ENCODE measurements at regions of chr4 and their contacts with region 1.

Region 1: GRCh38 chr4:16129336-16129735 is 45.5 kb upstream of the PROM1 start:
- DNase-seq: peak; percentile 91
- ATAC-seq: peak; percentile 93
- H3K4me3 ChIP-seq: no peak overlapping the region; a peak in 1 of 6 replicates
- H3K27ac ChIP-seq: no peak overlapping the region
- H3K4me1 ChIP-seq: peaks cover 83% of the 10 kb centered on the region
- H3K27me3 ChIP-seq: peaks cover 0 to 3% of the 10 kb centered on the region in 2 experiments; a peak in 1 of 5 replicates
- CTCF ChIP-seq: no peak
- EP300 ChIP-seq: peak in 1 of 2 experiments; percentile 85; a peak in 2 of 4 replicates
- POLR2A ChIP-seq: no peak
- RAD21 ChIP-seq: no peak

Region 2: DNA sequence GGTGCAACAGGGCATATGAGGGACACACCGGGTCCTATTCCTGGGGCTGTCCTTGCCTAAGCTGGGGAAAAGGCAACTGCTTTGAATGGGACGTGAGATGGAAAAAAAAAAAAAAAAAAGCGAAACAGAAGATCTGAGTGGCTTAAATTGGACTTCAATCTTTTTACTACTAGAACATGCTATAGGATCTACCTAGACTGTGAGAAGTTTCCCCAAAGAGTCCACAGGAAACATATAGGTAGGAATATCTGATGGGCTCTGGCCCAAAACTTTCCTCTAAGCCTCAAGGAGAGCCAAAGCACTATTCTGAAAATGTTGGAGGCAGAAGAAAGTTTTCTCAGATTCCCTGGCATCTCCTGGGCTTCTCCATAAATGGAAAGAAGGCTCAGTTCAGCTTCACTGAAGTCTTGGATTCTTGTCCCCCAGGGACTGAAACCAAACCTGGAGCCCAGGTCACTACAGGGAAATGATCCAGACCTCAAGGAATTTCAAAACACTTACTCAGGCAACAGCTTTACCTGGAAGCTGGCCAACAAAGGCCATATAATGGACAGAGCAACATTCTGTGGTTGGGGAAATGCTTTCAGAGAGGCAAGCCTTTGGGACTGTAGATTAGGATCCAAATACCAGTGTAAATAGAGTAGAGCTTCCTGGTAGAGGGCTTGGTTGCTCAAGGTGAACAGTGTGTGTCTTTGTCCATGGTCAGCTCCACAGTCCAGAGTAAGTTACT is 11.3 kb after region 1 on chr4:
- CTCF ChIA-PET with region 1: no interaction called
- POLR2A ChIA-PET with region 1: interaction called, 15 read pairs
- in situ Hi-C with region 1: no loop called
- intact Hi-C with region 1: loop called (anchors 1 kb)
- DNase-seq: peak; percentile 99
- ATAC-seq: peak; percentile 99
- H3K4me3 ChIP-seq: no peak overlapping the region; a peak in 1 of 6 replicates
- H3K27ac ChIP-seq: peak overlapping the region; percentile 72
- H3K4me1 ChIP-seq: peaks cover 64% of the 10 kb centered on the region
- H3K27me3 ChIP-seq: no peaks in the 10 kb centered on the region; a peak in 1 of 5 replicates
- CTCF ChIP-seq: no peak
- EP300 ChIP-seq: peak in 1 of 2 experiments; percentile 87; a peak in 2 of 4 replicates
- POLR2A ChIP-seq: no peak
- RAD21 ChIP-seq: no peak